ENCODE measurements at regions of chr3 and their contacts with region 1.

Region 1: GRCh38 chr3:146544002-146544928 is at the start of gene PLSCR1:
- DNase-seq: peak; percentile 99
- H3K4me3 ChIP-seq: peak within 1 kb of the TSS; percentile 66 to 78 (median 66)
- H3K27ac ChIP-seq: peak within 1 kb of the TSS; percentile 78
- H3K4me1 ChIP-seq: peaks cover 9% of the 10 kb centered on the region
- H3K27me3 ChIP-seq: no peaks in the 10 kb centered on the region
- CTCF ChIP-seq: no peak
- POLR2A ChIP-seq: peak; percentile 74
- total RNA-seq, gene PLSCR1: 65.6 and 78.7 TPM in 2 replicates

Region 2: DNA sequence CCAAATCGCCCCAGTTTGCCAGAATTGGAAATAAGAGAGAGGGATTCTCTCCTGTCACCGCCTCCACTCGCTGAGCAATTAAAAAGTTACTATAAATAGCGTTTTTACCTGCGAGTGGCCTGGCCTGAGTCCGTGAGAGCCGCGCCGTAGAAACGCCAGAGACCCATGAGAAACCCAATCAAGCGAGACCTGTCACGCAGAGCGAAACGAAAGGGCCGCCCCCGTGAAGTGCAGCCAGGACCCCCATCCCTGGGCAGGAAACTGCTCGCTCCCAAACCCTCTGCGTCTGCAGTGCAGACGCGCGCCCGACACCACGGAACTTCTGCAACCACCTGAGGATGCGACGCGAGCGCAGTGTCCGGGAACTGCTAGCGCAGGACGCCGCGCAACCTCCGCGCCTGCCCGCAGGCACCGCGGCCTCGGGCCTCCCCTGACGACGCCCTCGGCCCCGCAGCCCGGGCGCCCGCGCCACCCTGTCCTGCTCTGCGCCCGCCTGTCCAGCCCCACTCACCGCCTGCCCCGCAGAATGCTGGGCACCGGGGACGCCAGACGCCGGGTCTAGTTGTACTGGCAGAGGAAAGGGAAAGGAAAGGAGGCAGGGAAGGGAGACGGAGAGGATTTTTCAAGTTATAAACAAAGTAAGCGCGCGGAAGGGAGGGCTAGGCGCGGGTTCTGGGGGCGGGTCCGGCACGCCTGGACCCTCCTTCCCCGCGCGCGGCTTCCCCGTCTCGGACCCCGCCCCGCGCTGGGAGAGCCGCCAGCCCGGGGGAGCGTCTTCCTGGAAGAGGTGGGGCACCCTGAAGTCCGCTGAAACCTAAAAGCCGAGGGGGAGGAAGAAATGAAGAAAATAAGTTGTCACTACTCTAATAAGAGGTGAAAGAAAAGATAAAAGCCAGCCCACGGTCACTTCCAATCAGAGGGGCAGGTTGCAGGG is 293.5 kb before region 1 on chr3 and contains the start of gene PLSCR4:
- CTCF ChIA-PET with region 1: interaction called, 3 read pairs
- POLR2A ChIA-PET with region 1: no interaction called
- dilution Hi-C with region 1: no loop called
- intact Hi-C with region 1: loop called (anchors 2 kb)
- DNase-seq: peak; percentile 93
- H3K4me3 ChIP-seq: peak within 1 kb of the TSS; percentile 94 to 97 (median 96)
- H3K27ac ChIP-seq: peak within 1 kb of the TSS; percentile 77
- H3K4me1 ChIP-seq: peaks cover 36% of the 10 kb centered on the region
- H3K27me3 ChIP-seq: no peaks in the 10 kb centered on the region
- CTCF ChIP-seq: no peak
- POLR2A ChIP-seq: peak; percentile 35
- total RNA-seq, gene PLSCR4: 81.5 and 91.8 TPM in 2 replicates

Region 3: GRCh38 chr3:146396792-146397191 is 147.5 kb before region 1 on chr3:
- CTCF ChIA-PET with region 1: no interaction called
- POLR2A ChIA-PET with region 1: no interaction called
- dilution Hi-C with region 1: no loop called
- intact Hi-C with region 1: loop called (anchors 5 kb)
- DNase-seq: peak; percentile 77
- H3K4me3 ChIP-seq: no peak overlapping the region
- H3K27ac ChIP-seq: peak overlapping the region; percentile 41
- H3K4me1 ChIP-seq: peaks cover 13% of the 10 kb centered on the region
- H3K27me3 ChIP-seq: no peaks in the 10 kb centered on the region
- CTCF ChIP-seq: no peak
- POLR2A ChIP-seq: no peak

Region 4: DNA sequence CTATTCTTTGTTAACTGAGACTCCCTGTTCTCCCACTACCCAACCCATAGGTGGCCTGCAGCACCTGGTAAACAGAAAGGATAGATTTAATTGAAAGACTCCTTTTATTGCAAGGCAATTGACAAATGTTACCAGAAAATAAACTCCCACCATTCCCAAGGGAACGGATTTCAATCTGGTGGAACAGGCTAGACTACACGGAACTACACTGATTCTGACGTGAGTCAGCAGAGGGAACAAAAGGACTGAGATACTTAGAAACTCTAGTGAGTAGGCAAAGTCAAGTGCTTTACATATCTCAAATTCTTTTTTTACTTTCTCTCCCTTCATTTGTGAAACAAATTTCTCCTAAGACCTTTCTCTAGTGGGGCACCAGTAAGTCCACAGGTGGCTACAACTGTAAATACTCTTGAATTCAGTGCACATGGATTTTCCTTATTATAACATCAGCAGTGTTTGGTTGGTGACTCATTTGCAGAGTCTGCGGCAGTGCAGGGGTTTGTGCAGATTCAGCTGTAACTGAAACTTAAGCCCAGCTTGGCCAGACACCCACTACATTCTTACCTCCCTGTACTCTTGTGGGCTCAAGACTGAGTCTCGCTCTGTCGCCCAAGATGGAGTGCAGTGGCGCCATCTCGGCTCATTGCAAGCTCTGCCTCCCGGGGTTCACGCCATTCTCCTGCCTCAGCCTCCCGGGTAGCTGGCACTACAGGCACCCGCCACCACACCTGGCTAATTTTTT is 40.6 kb before region 1 on chr3:
- CTCF ChIA-PET with region 1: interaction called, 3 read pairs
- POLR2A ChIA-PET with region 1: interaction called, 3 read pairs
- dilution Hi-C with region 1: no loop called
- intact Hi-C with region 1: loop called (anchors 1 kb)
- DNase-seq: peak; percentile 45
- H3K4me3 ChIP-seq: no peak overlapping the region
- H3K27ac ChIP-seq: no peak overlapping the region
- H3K4me1 ChIP-seq: peaks cover 35% of the 10 kb centered on the region
- H3K27me3 ChIP-seq: no peaks in the 10 kb centered on the region
- CTCF ChIP-seq: no peak
- POLR2A ChIP-seq: no peak

Region 5: DNA sequence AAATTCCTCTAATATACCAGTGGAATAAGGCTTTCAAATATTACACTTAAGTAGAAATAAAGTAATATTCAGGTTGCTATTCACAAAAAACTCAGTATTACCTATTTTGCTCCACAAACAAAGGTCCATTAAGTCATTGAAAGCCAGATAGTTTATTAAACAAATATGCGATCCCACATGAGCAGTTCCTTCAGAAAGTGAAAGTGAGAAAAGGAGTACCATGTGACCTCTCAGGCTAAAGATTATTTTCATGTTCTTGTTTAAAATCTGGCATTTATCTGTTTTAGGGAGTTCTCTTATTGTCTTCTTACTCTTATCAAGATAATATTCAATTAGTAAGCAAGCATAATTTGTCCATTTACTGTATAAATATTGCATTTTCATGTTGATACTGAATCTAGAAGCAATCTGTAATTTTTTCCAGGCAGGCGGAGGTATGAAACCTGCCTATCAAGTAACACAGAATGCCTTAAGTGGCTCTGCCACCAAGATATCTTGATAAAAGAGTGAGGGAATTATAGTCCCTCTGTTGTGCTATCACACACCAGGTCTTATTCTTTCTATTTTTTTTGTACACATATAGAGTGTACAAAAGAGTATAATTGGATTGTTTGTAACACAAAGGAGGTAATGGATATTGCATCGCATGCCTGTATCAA is 81.0 kb after region 1 on chr3:
- CTCF ChIA-PET with region 1: no interaction called
- POLR2A ChIA-PET with region 1: no interaction called
- dilution Hi-C with region 1: no loop called
- intact Hi-C with region 1: loop called (anchors 5 kb)
- DNase-seq: peak; percentile 66
- H3K4me3 ChIP-seq: peak overlapping the region in 2 of 3 experiments; percentile 7 to 67
- H3K27ac ChIP-seq: peak overlapping the region; percentile 48
- H3K4me1 ChIP-seq: peaks cover 18% of the 10 kb centered on the region
- H3K27me3 ChIP-seq: no peaks in the 10 kb centered on the region
- CTCF ChIP-seq: no peak
- POLR2A ChIP-seq: no peak

Measured in endothelial cell of umbilical vein (primary cell).